Sciatic nerve (tissue), 2 donors: ENCODE measurements at regions of chrX and their contacts with region 1.

Region 1: GRCh38 chrX:72421797-72422196 is 116.1 kb upstream of the CITED1 start:
- DNase-seq: no peak
- ATAC-seq: no peak

Region 2: GRCh38 chrX:72238721-72239475 is 182.9 kb before region 1 on chrX and contains the start of gene ERCC6L:
- intact Hi-C with region 1: no loop called
- DNase-seq: peak; percentile 90
- ATAC-seq: peak; percentile 99
- total RNA-seq, gene ERCC6L: 0.09 TPM

Region 3: DNA sequence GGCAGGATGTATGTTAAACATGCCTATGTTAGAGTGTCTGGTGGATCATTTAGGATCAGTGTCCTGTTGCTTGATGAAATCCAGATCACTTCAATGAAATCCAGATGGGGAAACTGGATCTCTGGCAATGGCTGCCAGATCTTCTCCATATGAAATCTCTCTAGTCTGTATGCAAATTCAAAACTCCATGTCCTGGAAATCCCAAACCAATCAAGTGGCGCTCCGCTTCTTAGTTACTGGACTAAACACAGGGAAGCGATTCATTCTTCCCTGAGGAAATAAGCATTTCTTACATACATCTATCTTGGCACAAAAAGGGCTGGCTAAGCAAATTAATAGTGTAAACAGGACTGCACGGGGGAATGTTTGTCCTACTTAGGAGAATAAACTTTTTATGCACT is 56.0 kb after region 1 on chrX:
- intact Hi-C with region 1: loop called (anchors 2 kb)
- DNase-seq: no peak
- ATAC-seq: no peak